Body of pancreas (tissue), 4 donors: ENCODE measurements at regions of chr1 and their contacts with region 1.

Region 1: GRCh38 chr1:119623678-119624077 is 24.4 kb downstream of the ZNF697 start:
- DNase-seq: no peak
- ATAC-seq: no peak
- H3K4me3 ChIP-seq: no peak overlapping the region
- H3K27ac ChIP-seq: no peak overlapping the region
- H3K4me1 ChIP-seq: peaks cover 6% of the 10 kb centered on the region
- H3K27me3 ChIP-seq: no peaks in the 10 kb centered on the region
- CTCF ChIP-seq: no peak
- POLR2A ChIP-seq: no peak

Region 2: GRCh38 chr1:119435052-119435451 is 188.6 kb before region 1 on chr1:
- intact Hi-C with region 1: no loop called
- DNase-seq: no peak
- ATAC-seq: no peak
- H3K4me3 ChIP-seq: no peak overlapping the region
- H3K27ac ChIP-seq: no peak overlapping the region
- H3K4me1 ChIP-seq: no peaks in the 10 kb centered on the region
- H3K27me3 ChIP-seq: no peaks in the 10 kb centered on the region
- CTCF ChIP-seq: no peak
- POLR2A ChIP-seq: no peak

Region 3: DNA sequence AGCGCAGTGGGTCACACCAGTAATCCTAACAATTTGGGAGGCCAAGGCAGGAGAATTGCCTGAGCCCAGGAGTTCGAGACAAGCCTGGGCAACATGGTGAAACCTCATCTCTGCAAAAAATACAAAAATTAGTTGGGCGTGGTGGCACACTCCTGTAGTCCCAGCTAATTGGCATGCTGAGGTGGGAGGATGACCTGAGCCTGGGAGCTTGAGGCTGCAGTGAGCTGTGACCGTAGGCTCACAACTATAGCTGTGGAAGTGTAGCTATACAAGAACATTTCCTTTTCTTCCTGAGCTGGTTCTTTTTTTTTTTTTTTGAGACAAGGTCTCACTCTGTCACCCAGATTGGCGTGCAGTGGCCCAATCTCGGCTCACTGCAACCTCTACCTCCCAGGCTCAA is 43.5 kb after region 1 on chr1:
- intact Hi-C with region 1: loop called (anchors 5 kb)
- DNase-seq: no peak
- ATAC-seq: no peak
- H3K4me3 ChIP-seq: no peak overlapping the region
- H3K27ac ChIP-seq: no peak overlapping the region
- H3K4me1 ChIP-seq: no peaks in the 10 kb centered on the region
- H3K27me3 ChIP-seq: no peaks in the 10 kb centered on the region
- CTCF ChIP-seq: no peak
- POLR2A ChIP-seq: no peak

Region 4: GRCh38 chr1:119827010-119827409 is 203.3 kb after region 1 on chr1:
- intact Hi-C with region 1: no loop called
- DNase-seq: no peak
- ATAC-seq: no peak
- H3K4me3 ChIP-seq: no peak overlapping the region
- H3K27ac ChIP-seq: no peak overlapping the region
- H3K4me1 ChIP-seq: no peaks in the 10 kb centered on the region
- H3K27me3 ChIP-seq: no peaks in the 10 kb centered on the region
- CTCF ChIP-seq: peak in 4 of 7 experiments; percentile 12 to 24 (median 18)
- POLR2A ChIP-seq: no peak